ENCODE measurements at regions of chr12 and their contacts with region 1.

Region 1: DNA sequence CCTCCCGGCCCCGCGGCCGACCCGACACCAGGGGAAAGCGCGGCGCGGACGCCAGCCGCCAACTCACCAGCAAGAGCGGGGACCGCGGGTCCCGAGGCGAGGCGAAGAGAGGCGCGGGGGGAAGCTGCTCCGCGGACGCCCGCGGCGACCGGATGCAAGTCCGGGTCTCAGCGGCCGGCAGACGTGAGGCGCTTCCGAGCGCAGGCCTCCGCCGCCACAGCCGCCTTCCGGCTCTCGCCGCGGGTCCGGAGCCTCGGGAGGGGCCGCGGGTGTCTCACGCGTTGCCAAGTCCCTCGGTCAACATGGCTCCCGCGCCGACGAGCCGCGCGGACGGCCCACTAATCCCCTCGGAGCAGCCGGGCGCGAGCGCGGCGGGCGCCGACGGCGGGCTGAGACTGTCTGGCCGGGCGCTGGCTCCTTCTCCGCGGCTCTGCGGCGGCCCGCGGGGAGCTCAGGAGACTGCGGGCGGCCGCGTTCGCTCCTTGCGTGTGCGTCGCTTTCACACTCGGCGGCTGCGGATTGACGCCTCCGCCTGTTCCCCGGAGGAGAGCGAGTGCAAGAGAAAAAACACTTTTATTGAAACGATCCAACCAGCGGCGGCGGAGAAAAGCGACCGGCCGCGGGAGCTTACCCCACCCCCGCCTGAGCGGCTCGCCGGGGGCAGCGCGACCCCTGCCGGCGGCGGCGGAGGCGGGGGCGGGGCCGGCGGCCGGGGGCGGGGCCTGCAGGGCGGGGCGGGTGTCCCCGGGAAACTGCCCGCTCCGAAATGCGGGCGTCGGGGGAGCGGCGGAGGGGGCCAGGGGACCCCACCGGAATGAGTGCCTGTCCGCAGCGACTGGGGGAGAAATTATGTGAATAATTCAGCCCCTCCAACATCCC is at the start of gene CDK17:
- DNase-seq: peak; percentile 90
- ATAC-seq: peak; percentile 66
- H3K4me3 Mint-ChIP-seq: peak within 1 kb of the TSS; percentile 92
- H3K27ac Mint-ChIP-seq: peak within 1 kb of the TSS; percentile 96
- H3K4me1 Mint-ChIP-seq: peaks cover 35% of the 10 kb centered on the region
- H3K27me3 Mint-ChIP-seq: no peaks in the 10 kb centered on the region
- CTCF ChIP-seq: no peak
- total RNA-seq, gene CDK17: 28.4 to 29.0 TPM

Region 2: GRCh38 chr12:96208801-96209549 is 191.2 kb before region 1 on chr12:
- CTCF ChIA-PET with region 1: interaction called, 15 read pairs
- POLR2A ChIA-PET with region 1: interaction called, 8 read pairs
- intact Hi-C with region 1: no loop called
- DNase-seq: no peak
- ATAC-seq: no peak
- H3K4me3 Mint-ChIP-seq: peak overlapping the region; percentile 9
- H3K27ac Mint-ChIP-seq: peak overlapping the region; percentile 43
- H3K4me1 Mint-ChIP-seq: peaks cover 90% of the 10 kb centered on the region
- H3K27me3 Mint-ChIP-seq: no peaks in the 10 kb centered on the region
- CTCF ChIP-seq: no peak

Region 3: DNA sequence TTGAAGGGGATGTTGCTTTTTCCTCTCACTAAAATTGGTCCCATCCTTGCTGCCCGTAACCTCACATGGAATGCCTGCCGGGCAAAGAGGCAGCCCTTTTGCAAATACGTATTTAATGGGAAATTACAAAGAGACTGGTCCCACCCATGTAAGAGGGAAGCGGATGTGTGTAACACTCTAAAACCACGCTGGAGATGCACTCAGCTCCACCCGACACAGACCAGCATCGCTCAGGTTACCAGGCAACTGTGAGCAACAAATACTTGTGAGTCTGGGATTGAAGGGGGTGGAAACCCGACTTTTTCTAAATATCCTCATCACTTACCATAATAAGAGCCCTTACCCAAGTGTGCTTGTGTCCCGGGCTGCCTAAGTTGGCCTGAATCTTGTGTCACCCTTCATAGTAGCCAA is 158.3 kb before region 1 on chr12:
- CTCF ChIA-PET with region 1: interaction called, 4 read pairs
- POLR2A ChIA-PET with region 1: interaction called, 4 read pairs
- intact Hi-C with region 1: loop called (anchors 5 kb)
- DNase-seq: peak; percentile 70
- ATAC-seq: peak; percentile 87
- H3K4me3 Mint-ChIP-seq: no peak overlapping the region
- H3K27ac Mint-ChIP-seq: peak overlapping the region; percentile 64
- H3K4me1 Mint-ChIP-seq: peaks cover 48% of the 10 kb centered on the region
- H3K27me3 Mint-ChIP-seq: no peaks in the 10 kb centered on the region
- CTCF ChIP-seq: no peak

Region 4: GRCh38 chr12:96335270-96335669 is 64.9 kb before region 1 on chr12:
- CTCF ChIA-PET with region 1: interaction called, 4 read pairs
- POLR2A ChIA-PET with region 1: interaction called, 10 read pairs
- intact Hi-C with region 1: no loop called
- DNase-seq: no peak
- ATAC-seq: peak; percentile 76
- H3K4me3 Mint-ChIP-seq: peak overlapping the region; percentile 52
- H3K27ac Mint-ChIP-seq: peak overlapping the region; percentile 58
- H3K4me1 Mint-ChIP-seq: peaks cover 43% of the 10 kb centered on the region
- H3K27me3 Mint-ChIP-seq: no peaks in the 10 kb centered on the region
- CTCF ChIP-seq: no peak

Region 5: DNA sequence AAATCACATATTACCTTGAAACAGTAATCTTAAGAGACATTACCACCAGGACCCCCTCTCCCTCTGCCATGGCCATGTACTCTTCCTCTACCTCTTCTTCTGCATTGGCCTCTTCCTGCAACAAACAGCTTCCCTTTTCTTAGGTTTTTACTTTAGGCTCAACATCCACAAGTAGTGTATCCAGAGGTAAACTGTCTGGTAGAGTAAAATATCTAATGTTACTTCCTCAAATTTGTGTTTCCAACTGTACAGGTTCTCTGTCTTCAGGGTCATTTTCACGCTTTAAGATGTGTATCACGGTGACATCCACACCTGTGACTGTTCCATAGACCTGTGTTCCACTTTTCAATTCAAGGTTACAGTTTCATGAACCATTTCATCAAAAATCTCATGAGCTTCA is 13.4 kb before region 1 on chr12:
- CTCF ChIA-PET with region 1: interaction called, 15 read pairs
- POLR2A ChIA-PET with region 1: interaction called, 44 read pairs
- intact Hi-C with region 1: no loop called
- DNase-seq: no peak
- ATAC-seq: no peak
- H3K4me3 Mint-ChIP-seq: no peak overlapping the region
- H3K27ac Mint-ChIP-seq: peak overlapping the region; percentile 62
- H3K4me1 Mint-ChIP-seq: peaks cover 62% of the 10 kb centered on the region
- H3K27me3 Mint-ChIP-seq: no peaks in the 10 kb centered on the region
- CTCF ChIP-seq: no peak

Region 6: DNA sequence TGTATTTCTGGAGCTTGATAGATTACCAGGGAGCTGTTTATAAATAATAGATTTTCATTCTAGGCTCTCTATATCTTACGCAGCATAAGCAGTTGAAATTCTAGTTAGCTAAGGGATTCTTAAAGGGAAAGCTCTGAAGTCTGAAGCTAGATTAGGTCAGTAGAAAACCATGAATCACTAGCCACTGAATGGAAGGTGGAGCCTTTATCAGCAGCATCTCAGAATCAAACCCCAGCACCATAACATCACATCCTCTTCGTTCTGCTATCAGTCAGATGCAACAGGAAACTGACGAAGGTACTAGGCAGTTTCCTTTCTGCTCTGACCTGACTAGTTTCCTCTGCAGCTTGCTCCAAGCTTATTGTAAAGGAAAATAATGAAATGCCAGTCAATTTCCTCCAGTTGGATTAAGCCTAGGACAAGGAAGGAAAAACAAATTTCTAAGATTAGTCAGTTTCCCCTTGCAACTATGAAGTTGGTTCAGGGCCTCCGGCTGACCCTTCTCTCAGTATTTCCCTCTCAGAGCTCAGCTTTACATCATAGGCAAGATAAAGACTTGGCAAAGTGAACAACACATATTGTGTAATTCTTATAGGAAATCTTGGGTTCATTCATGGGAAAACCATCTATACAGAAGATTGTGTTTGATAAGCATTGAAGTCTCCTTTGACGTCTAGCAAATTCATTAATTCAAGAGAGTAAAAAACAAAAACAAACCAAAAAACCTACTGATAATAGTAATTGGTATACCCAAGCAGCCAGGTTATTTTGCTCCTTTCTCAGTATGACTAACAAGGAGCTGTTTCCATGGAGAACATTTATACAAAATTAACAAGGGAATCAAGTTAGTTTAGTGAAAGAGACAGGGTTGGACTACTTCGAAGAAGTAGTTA is 45.8 kb after region 1 on chr12:
- CTCF ChIA-PET with region 1: interaction called, 30 read pairs
- POLR2A ChIA-PET with region 1: interaction called, 9 read pairs
- intact Hi-C with region 1: loop called (anchors 5 kb)
- DNase-seq: peak; percentile 75
- ATAC-seq: peak; percentile 97
- H3K4me3 Mint-ChIP-seq: peak overlapping the region; percentile 61
- H3K27ac Mint-ChIP-seq: peak overlapping the region; percentile 97
- H3K4me1 Mint-ChIP-seq: peaks cover 41% of the 10 kb centered on the region
- H3K27me3 Mint-ChIP-seq: no peaks in the 10 kb centered on the region
- CTCF ChIP-seq: no peak

Region 7: DNA sequence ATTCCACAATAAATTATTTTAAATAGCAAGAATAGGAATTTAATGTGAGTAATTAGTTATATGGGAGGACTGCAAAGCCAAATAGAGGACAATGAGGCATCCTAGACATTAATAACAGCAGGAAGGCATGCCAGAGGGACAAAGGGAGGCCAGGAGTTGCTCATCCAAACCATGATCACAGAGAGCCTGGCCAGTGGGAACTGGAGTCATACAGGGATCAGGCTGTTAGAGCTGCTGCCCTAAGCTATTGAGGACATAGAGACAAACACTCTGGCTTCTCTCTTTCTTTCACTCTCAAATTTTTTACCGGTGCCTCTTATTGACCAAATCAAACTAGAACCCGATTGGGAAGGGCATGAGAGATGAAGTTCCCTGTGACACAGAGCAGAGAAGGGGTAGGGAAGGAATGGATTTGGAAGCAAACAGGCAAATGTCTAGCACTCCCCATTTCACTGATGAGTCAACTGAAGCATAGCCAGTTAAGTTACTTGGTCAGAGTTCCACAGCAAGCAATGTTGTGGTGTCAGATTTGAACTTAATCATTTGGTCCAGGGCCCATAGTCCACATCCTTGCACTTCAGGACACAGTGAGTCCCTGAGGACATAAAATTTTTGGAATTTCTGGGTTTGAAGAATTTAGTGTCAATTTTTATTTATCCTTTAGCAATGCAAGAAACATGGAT is 71.4 kb after region 1 on chr12:
- CTCF ChIA-PET with region 1: no interaction called
- POLR2A ChIA-PET with region 1: no interaction called
- intact Hi-C with region 1: no loop called
- DNase-seq: no peak
- ATAC-seq: no peak
- H3K4me3 Mint-ChIP-seq: no peak overlapping the region
- H3K27ac Mint-ChIP-seq: no peak overlapping the region
- H3K4me1 Mint-ChIP-seq: peaks cover 12% of the 10 kb centered on the region
- H3K27me3 Mint-ChIP-seq: no peaks in the 10 kb centered on the region
- CTCF ChIP-seq: no peak

Region 8: GRCh38 chr12:96501139-96501761 is 101.1 kb after region 1 on chr12:
- CTCF ChIA-PET with region 1: interaction called, 5 read pairs
- POLR2A ChIA-PET with region 1: interaction called, 5 read pairs
- intact Hi-C with region 1: loop called (anchors 5 kb)
- DNase-seq: peak; percentile 46
- ATAC-seq: peak; percentile 77
- H3K4me3 Mint-ChIP-seq: no peak overlapping the region
- H3K27ac Mint-ChIP-seq: peak overlapping the region; percentile 88
- H3K4me1 Mint-ChIP-seq: peaks cover 36% of the 10 kb centered on the region
- H3K27me3 Mint-ChIP-seq: no peaks in the 10 kb centered on the region
- CTCF ChIP-seq: no peak